Motor neuron (in vitro differentiated cells): ENCODE measurements at regions of chr11 and their contacts with region 1.

Region 1: DNA sequence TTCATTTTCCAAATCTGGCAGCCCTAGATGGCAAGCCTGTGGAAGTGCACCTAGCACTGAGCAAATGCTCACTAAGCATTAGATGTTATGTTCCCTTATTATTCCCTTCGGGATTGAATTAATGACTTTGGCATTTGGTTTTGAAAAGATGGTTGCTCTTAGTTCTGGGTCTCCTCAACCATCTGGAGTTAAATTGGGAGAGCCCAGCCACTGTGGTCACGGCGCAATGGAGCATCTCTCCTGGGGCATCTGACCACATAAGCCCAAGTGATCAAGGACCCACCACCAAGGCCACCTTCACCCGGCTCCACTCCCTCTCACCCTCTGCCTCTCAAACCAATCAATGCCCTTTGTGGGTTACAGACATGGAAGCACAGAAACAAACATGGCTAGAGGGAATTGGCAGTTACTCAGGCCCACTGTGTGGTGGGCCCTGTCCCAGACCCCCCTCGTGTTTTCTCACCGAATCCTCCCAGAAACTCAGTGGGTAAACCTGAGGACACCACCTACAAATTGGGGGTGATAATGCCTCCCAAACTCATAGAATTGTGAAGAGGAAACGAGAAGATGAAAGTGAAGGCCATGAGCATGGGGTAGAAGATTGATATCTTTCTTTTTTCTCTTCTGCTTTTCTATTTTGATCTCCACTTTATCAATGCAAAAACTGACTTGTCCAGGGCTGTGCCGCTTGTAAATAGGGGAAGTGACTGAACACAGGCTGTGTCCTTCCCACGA is 52.2 kb downstream of the IRAG1 start:
- ATAC-seq: no peak
- H3K4me3 ChIP-seq: no peak overlapping the region
- H3K27ac ChIP-seq: no peak overlapping the region
- H3K4me1 ChIP-seq: peaks cover 5 to 6% of the 10 kb centered on the region in 2 donors

Region 2: DNA sequence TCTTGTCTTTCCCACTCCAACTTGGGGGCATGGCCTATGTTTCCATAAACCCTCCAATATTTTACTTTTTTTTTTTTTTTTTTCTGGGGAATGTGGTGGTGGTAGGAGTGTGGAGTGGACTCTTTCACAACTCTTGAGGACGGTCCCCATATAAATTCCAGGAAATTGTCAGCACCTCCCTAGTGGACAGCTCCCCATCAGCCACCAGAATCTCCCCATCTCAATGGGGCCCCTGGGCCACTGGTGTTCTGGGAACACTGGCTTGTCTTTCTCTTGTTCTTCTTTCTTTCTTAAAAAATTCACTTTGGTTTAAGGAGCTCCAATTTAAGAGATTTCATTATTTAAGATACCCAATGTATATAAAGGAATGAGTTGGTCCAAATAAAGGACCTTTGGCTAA is 262.3 kb before region 1 on chr11:
- in situ Hi-C with region 1: no loop called
- ATAC-seq: peak in 1 of 8 experiments; percentile 30
- H3K4me3 ChIP-seq: no peak overlapping the region
- H3K27ac ChIP-seq: no peak overlapping the region
- H3K4me1 ChIP-seq: no peaks in the 10 kb centered on the region

Region 3: GRCh38 chr11:10405855-10406592 is 235.3 kb before region 1 on chr11:
- in situ Hi-C with region 1: loop called in 1 of 9 experiments (anchors 10 kb)
- ATAC-seq: peak; percentile 92 to 100 (median 99)
- H3K4me3 ChIP-seq: no peak overlapping the region
- H3K27ac ChIP-seq: no peak overlapping the region
- H3K4me1 ChIP-seq: no peaks in the 10 kb centered on the region